Activated CD4-positive, alpha-beta memory T cell treated with anti-CD3 and anti-CD28 coated beads for 36 hours (primary cell): ENCODE measurements at regions of chr6 and their contacts with region 1.

Region 1: DNA sequence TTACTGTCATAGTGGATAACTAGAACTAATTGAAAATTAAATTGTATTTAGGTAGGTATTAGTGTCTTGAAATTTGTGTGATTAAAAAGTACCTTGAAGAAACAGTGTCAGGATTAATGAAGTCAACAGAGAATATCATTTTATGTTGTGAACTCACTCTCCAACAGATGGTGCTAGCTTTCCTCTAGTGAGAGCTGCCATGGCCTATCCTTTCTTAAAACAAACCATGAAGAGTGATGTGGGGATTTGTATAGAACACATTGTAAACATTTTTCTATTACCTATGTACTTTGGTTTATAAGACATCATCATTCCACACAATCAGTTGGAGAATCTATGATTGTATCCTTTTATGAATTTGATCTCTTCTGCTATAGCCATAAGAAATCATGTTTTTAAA is 4.8 kb upstream of the SRSF12 start:
- DNase-seq: no peak
- H3K4me3 Mint-ChIP-seq: no peak overlapping the region
- H3K27ac Mint-ChIP-seq: no peak overlapping the region
- H3K4me1 Mint-ChIP-seq: no peaks in the 10 kb centered on the region
- H3K27me3 Mint-ChIP-seq: peaks cover 2% of the 10 kb centered on the region

Region 2: GRCh38 chr6:89242574-89243330 is 120.1 kb after region 1 on chr6:
- CTCF ChIA-PET with region 1: interaction called, 5 read pairs
- POLR2A ChIA-PET with region 1: no interaction called
- intact Hi-C with region 1: loop called (anchors 1 kb)
- DNase-seq: no peak
- H3K4me3 Mint-ChIP-seq: no peak overlapping the region
- H3K27ac Mint-ChIP-seq: no peak overlapping the region
- H3K4me1 Mint-ChIP-seq: peaks cover 10% of the 10 kb centered on the region
- H3K27me3 Mint-ChIP-seq: peaks cover 2% of the 10 kb centered on the region